ENCODE measurements at regions of chrX and their contacts with region 1.

Region 1: DNA sequence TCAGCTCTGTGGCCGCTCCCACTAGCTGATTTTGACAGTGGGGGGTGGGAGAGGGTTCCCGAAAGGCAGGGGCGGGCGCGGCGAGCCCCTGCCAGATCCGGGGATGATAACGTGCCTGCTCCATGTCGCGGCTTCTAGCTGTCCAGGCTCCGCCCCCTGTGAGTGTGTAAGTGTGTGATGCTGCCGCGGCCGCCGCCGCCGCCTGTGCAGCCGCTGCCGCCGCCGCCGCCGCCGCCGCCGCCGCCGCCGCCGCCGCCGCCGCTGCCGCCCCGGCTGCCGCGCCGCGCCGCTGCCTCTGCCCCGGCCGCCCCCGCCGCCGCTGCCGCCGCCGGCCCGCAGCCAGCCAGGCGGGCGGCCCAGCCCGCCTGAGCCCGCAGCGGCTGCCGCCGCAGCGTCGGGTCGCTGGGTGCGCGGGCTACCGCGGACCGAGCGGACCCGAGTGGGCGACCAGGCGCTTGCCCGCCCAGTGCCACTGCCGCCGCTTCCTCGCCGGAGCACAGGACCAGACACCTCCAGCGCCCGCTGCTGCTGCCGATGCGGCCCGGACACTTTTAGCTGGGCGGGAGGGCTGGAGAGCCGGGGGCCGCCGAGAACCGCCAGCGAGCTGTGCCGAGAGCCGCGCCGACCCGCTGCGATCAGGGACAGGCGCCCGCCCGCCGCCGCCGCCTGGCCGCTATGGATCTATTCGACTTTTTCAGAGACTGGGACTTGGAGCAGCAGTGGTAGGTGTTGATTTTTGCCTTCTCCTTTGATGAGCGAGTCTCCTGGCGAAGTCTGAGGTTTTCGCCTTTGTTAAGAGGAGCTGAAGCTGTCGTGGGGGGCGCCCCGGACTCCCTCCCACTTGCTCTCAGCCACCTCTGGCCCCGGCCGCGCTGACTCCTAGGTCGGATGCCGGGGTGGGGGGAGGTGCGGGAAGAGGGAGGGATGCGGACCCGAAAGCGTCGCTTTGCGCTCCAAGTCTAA is at the start of gene AFF2:
- DNase-seq: peak; percentile 11
- H3K4me3 ChIP-seq: peak within 1 kb of the TSS in 1 of 3 experiments; percentile 41
- H3K27ac ChIP-seq: no peak within 1 kb of the TSS
- H3K4me1 ChIP-seq: peaks cover 3% of the 10 kb centered on the region
- H3K27me3 ChIP-seq: peaks cover 18 to 27% of the 10 kb centered on the region in 2 experiments
- CTCF ChIP-seq: no peak
- POLR2A ChIP-seq: no peak
- total RNA-seq, gene AFF2: 0.07 TPM in 1 of 2 replicates, not detected in the other

Region 2: GRCh38 chrX:148223361-148223760 is 277.3 kb before region 1 on chrX:
- CTCF ChIA-PET with region 1: no interaction called
- POLR2A ChIA-PET with region 1: no interaction called
- dilution Hi-C with region 1: no loop called
- intact Hi-C with region 1: no loop called
- DNase-seq: peak; percentile 51
- H3K4me3 ChIP-seq: no peak overlapping the region
- H3K27ac ChIP-seq: no peak overlapping the region
- H3K4me1 ChIP-seq: peaks cover 3% of the 10 kb centered on the region
- H3K27me3 ChIP-seq: no peaks in the 10 kb centered on the region
- CTCF ChIP-seq: no peak
- POLR2A ChIP-seq: no peak

Region 3: DNA sequence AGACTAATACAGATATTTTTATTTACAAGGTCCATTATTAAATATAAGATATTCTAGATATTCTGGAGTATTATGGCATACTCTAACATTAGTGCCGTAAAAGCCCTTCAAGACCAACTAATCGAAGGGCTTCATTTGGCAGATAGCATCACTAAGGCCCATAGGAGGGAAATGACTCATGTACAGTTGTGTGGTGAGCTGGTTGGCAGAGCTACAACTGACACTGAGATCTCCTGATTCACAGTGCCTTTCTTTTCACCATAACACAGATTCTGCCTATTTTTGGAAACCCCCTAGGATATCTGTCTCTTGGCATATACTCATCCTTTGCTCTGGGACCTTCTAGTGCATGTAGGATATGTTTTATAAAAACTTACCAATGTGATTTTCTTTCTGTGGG is 202.0 kb before region 1 on chrX:
- CTCF ChIA-PET with region 1: no interaction called
- POLR2A ChIA-PET with region 1: no interaction called
- dilution Hi-C with region 1: no loop called
- intact Hi-C with region 1: loop called (anchors 10 kb)
- DNase-seq: peak; percentile 72
- H3K4me3 ChIP-seq: no peak overlapping the region
- H3K27ac ChIP-seq: peak overlapping the region; percentile 34
- H3K4me1 ChIP-seq: peaks cover 5% of the 10 kb centered on the region
- H3K27me3 ChIP-seq: no peaks in the 10 kb centered on the region
- CTCF ChIP-seq: no peak
- POLR2A ChIP-seq: no peak

Measured in endothelial cell of umbilical vein (primary cell).